ENCODE measurements at regions of chr3 and their contacts with region 1.

Region 1: GRCh38 chr3:125437631-125438435 is 62.7 kb upstream of the ZNF148 start:
- DNase-seq: peak; percentile 30 to 89
- H3K4me3 ChIP-seq: no peak overlapping the region
- CTCF ChIP-seq: peak in 1 of 3 donors; percentile 81
- POLR2A ChIP-seq: no peak

Region 2: GRCh38 chr3:124928333-124929202 is 509.3 kb before region 1 on chr3:
- intact Hi-C with region 1: loop called (anchors 10 kb)
- DNase-seq: peak in 1 of 2 donors; percentile 66
- H3K4me3 ChIP-seq: no peak overlapping the region
- CTCF ChIP-seq: no peak
- POLR2A ChIP-seq: no peak

Region 3: DNA sequence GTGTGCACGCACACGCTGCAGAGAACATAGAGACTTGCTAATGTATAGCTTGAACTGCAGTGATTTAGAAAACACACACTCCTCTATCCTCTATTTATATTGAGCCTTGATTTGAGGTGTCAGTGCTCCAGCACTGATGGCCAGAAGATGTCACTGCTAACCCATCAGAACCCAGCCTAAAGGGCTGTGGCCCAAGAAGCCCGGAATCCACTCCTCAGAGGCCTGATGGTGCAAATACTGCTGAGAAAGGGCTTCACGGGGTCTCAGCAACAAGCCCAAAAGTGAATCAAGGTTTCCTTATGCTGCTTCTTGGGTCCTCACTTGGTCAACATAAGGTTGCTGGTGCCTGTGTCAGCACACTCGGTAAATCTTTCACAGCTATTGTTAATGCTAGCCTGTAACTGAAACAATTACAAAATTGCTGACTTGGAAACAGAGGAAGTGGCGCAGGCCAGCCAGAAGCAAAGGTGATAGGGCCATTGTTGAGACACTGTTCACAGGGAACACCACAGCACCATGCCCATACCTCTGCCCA is 442.3 kb before region 1 on chr3:
- intact Hi-C with region 1: loop called (anchors 5 kb)
- DNase-seq: peak; percentile 47 to 86
- H3K4me3 ChIP-seq: no peak overlapping the region
- CTCF ChIP-seq: peak in 1 of 3 donors; percentile 34
- POLR2A ChIP-seq: no peak

Region 4: DNA sequence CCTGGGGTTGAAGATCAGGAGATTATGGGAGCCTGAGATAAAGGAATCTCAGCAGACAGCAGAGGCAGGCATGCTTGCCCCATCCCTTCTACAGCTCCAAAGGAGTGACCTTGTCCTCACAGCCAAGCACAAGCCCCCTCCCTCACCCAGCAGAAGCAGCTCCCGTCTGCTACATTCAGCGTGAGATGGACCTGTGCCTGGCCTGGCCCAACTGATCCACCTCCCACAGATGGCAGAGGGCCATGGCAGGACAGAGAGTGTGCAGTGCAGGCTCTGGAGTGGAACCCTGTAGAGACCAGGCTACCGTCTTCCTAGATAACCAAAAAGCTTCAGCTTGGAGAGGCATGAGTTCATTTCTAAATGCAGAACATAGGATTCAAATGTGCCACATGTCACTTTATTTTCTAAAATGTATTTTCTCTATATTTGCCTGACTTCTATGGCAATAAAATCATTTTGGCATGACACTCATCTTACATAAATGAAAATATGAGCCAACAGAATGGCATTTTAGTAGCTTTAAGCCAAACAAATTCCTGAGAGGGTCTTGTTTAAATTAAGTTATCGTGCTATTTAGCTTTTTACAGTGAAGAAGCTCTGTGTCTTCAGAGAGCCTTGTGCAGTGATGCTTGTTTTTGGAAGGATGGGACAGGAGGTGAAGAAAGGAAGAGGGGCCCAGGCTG is 269.0 kb before region 1 on chr3:
- intact Hi-C with region 1: no loop called
- DNase-seq: peak in 1 of 2 donors; percentile 40
- H3K4me3 ChIP-seq: no peak overlapping the region
- CTCF ChIP-seq: no peak
- POLR2A ChIP-seq: no peak

Region 5: DNA sequence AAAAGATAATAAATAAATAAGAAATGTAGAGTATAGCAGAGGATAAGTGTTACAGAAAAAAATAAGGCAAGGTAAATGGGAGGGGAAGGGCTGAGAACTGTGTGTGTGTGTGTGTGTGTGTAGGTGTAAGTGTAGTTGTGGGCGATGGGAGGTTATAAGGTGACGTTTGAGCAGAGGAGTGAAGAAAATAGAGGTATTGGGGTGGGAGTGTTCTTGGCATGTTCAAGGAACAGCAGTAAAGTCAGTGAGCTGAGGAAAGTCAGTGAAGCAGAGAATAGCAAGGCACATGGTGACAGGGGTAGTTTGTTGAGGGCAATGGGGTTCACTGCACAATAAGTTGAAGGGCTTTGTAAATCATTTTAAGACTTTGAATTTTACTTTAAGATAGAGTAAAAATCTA is 31.8 kb before region 1 on chr3:
- intact Hi-C with region 1: no loop called
- DNase-seq: no peak
- H3K4me3 ChIP-seq: no peak overlapping the region
- CTCF ChIP-seq: no peak
- POLR2A ChIP-seq: no peak

Measured in lower leg skin (tissue), 4 donors.